ENCODE measurements at regions of chr17 and their contacts with region 1.

Region 1: GRCh38 chr17:27879987-27880608 is 13.1 kb downstream of the LYRM9 start:
- H3K4me3 ChIP-seq: no peak overlapping the region
- H3K27ac ChIP-seq: no peak overlapping the region
- H3K4me1 ChIP-seq: no peaks in the 10 kb centered on the region
- CTCF ChIP-seq: peak; percentile 73

Region 2: DNA sequence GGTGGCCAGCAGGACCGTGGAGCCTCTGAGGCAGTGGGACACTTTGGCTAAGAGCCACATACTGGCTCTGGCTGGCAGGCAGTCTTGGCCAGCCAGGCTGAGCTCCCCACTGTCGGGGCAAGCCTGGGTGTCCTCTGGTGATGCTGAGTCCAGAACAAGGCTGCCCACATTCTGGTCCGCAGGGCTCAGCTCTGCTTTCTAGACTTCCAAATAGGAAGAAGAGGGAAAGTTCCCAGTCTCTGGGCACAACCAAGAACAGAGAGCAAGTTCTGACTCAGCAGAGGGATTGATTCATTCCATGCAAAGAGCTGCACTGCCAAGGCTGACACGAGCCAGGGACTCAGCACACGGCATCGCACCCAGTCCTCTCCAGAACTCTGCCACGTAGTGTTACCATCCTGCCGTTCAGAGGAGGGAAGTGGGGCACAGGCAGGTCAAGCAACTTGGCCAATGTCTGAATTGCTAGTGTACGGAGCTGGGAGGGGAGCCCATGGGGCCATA is 138.7 kb before region 1 on chr17:
- CTCF ChIA-PET with region 1: no interaction called
- POLR2A ChIA-PET with region 1: no interaction called
- H3K4me3 ChIP-seq: no peak overlapping the region
- H3K27ac ChIP-seq: no peak overlapping the region
- H3K4me1 ChIP-seq: no peaks in the 10 kb centered on the region
- CTCF ChIP-seq: no peak

Region 3: GRCh38 chr17:27848931-27849330 is 31.2 kb before region 1 on chr17:
- CTCF ChIA-PET with region 1: interaction called, 10 read pairs
- POLR2A ChIA-PET with region 1: no interaction called
- H3K4me3 ChIP-seq: no peak overlapping the region
- H3K27ac ChIP-seq: no peak overlapping the region
- H3K4me1 ChIP-seq: no peaks in the 10 kb centered on the region
- CTCF ChIP-seq: no peak

Region 4: GRCh38 chr17:27858621-27859305 is 21.3 kb before region 1 on chr17:
- CTCF ChIA-PET with region 1: interaction called, 10 read pairs
- POLR2A ChIA-PET with region 1: no interaction called
- H3K4me3 ChIP-seq: no peak overlapping the region
- H3K27ac ChIP-seq: no peak overlapping the region
- H3K4me1 ChIP-seq: no peaks in the 10 kb centered on the region
- CTCF ChIP-seq: no peak